ENCODE measurements at regions of chr7 and their contacts with region 1.

Region 1: DNA sequence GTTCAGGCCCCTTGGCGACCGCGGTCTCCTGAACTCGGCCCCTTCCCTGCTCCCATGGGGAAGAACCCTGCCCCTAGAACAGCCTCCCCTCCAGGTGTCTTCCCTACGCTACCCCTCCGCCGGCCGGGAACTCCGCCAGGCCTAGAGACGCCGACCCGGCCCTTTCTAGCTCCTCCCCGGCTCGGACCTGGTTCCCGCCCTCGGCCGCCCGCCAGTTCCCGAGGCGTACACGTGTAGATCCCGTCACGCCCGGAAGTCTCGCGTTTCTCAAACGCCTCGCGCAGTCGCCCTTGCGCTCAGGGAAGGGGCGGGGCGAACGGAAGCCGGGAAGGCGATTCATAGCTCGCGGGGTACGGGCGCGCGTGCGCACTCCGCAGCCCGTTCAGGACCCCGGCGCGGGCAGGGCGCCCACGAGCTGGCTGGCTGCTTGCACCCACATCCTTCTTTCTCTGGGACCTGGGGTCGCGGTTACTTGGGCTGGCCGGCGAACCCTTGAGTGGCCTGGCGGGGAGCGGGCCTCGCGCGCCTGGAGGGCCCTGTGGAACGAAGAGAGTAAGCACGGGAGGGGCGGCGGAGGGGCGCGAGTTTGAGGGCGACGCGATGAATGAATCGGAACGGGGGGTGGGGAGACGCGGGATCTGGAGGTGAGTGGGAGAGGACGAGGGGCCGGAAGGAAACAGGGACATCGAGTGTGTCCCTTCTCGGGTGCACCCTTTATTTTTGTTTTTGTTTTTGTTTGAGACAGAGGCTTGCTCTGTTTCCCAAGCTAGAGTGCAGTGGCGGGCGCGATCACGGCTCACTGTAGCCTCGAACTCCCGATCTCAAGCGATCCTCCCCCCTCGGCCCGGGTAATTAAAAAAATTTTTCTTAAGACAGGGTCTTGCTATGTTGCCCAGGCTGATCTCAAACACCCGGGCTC is at the start of gene POP7:
- DNase-seq: peak; percentile 91 to 99
- H3K4me3 ChIP-seq: peak within 1 kb of the TSS; percentile 86
- H3K27ac ChIP-seq: peak within 1 kb of the TSS; percentile 43
- H3K4me1 ChIP-seq: peaks cover 12% of the 10 kb centered on the region; the same call in 1 of the 2 replicates
- H3K27me3 ChIP-seq: no peaks in the 10 kb centered on the region
- CTCF ChIP-seq: no peak
- total RNA-seq, gene POP7: 59.4 and 62.7 TPM in 2 replicates

Region 2: DNA sequence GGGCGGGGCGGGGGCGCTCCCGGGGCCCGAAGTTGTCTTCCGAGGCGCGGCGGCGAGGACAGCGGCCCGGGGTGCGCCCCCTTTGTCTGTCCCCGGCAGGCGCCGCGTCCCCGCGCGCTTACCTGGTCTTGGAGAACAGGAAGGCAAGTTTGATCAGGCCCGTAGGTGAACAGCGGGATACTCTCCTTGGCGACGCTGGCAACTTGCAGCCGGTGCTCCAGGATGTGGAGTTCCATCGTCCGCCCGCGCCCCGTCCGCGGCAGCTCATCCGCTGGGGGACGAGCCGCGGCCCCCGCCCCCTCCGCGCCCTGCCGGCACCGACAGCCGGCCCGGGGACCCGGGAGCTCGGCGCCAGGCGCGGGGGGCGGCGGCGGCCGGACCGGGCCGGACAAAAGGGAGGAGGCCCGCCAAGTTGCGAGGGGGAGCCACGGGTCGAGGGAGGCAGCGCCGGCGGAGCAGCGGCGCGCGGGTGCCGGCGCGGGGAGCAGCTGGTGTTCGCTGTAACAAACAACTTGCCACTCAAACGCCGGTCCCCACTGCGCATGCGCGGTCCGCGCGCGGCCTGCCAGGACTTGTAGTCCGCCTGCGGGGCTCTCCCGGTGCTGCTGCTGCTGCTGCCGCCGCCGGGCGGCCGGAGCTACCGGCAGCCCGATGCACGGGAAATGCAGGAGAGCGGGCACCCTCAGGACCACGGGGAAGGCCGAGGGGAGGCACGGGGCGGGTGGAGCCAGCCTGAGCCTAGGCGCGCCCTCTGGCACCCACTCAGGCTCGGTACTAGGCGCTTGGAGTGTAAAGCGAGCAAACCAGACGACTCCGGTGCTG is 434.1 kb before region 1 on chr7:
- CTCF ChIA-PET with region 1: no interaction called
- POLR2A ChIA-PET with region 1: interaction called, 17 read pairs
- intact Hi-C with region 1: no loop called
- DNase-seq: peak; percentile 78 to 98
- H3K4me3 ChIP-seq: peak overlapping the region; percentile 60
- H3K27ac ChIP-seq: no peak overlapping the region
- H3K4me1 ChIP-seq: peaks cover 28% of the 10 kb centered on the region
- H3K27me3 ChIP-seq: no peaks in the 10 kb centered on the region
- CTCF ChIP-seq: no peak

Region 3: DNA sequence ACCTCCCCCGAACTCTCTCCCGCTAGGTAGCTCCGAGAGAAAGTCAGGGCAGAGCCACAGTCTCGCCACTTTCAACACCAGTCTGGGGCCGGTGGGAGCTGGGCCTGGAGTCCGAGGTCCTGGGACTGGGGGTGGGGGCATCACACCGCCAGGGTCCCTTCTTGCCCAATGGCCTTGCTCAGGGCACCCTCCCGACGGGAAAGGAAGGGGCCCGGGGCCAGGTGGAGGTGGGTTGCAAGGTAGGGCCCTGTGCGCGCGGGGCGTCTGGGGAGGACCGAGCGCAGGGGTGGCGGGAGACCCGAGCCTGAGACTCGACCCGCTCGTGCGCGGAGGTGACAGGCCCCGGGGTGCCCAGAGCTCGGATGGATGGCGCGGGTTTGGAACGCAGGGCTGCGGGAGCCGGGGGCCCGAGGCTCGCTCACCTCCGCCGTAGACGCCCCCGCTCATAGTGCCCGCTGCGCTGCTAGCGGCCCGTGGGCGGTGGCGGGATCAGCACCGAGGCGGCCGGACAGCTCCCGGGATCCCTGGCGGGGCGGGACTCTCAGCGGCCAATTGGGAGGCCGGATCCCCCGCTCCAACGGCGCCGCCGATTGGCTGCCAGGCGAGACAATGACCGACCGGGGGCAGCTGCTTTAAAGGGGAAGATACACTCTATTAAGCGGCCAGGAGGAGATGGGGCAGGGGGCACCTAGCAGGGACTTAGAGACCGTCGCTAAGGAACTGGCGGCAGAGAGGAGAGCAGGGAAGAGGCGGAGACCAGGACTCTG is 49.9 kb before region 1 on chr7 and contains the start of gene ACTL6B:
- CTCF ChIA-PET with region 1: no interaction called
- POLR2A ChIA-PET with region 1: interaction called, 19 read pairs
- intact Hi-C with region 1: no loop called
- DNase-seq: no peak
- H3K4me3 ChIP-seq: no peak within 1 kb of the TSS
- H3K27ac ChIP-seq: no peak within 1 kb of the TSS
- H3K4me1 ChIP-seq: peaks cover 7% of the 10 kb centered on the region
- H3K27me3 ChIP-seq: no peaks in the 10 kb centered on the region
- CTCF ChIP-seq: no peak
- total RNA-seq, gene ACTL6B: not detected in 2 replicates

Region 4: DNA sequence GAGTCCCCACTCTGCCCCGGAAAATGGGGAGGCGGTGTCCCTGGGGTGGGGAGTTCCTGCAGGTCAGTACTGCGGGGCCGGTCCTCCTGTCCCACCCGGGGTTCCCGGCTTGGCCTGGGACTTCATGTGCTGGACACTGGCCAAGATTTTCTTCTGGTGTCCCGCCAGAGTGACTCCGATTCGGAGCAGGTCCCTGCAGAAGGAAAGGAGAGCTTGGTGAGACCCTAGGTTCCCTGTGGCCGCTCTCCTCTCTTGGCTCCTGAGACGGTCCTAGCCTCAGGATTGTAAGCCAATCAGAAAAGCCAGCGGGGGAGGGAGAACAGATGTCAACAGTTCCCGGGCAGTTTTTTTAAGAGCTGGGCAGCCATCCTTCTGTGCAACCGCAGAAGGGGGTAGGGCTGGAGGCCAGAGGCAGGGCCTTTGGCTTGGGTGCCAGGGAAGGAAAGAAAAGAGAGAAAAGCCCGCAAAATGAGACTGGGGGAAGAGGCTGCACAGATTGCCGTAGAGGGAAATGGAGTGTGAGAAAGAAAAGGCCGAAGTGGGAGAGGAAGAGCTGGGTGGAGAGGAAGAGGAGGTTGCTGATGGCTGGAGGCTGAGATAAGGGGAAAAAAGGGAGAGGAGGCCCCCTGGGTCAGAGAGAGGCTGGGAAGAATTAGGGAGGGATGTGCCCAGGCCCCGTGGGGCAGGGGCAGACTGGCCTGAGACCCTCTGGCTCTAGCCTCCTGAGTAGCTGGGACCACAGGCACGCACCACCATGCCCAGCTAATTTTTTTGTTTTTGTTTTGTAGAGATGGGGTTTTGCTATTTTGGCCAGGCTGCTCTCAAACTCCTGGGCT is 97.6 kb after region 1 on chr7:
- CTCF ChIA-PET with region 1: interaction called, 12 read pairs
- POLR2A ChIA-PET with region 1: interaction called, 5 read pairs
- intact Hi-C with region 1: loop called (anchors 5 kb)
- DNase-seq: peak in 1 of 2 experiments; percentile 76
- H3K4me3 ChIP-seq: no peak overlapping the region
- H3K27ac ChIP-seq: 0 out of 2 replicates have a peak overlapping the region, but pooled peaks have one; percentile 67
- H3K4me1 ChIP-seq: peaks cover 52% of the 10 kb centered on the region
- H3K27me3 ChIP-seq: no peaks in the 10 kb centered on the region
- CTCF ChIP-seq: no peak

Region 5: GRCh38 chr7:100867040-100867775 is 161.2 kb after region 1 on chr7 and contains the start of gene TRIP6:
- CTCF ChIA-PET with region 1: no interaction called
- POLR2A ChIA-PET with region 1: no interaction called
- intact Hi-C with region 1: loop called (anchors 5 kb)
- DNase-seq: peak; percentile 80 to 92
- H3K4me3 ChIP-seq: peak within 1 kb of the TSS; percentile 99
- H3K27ac ChIP-seq: peak within 1 kb of the TSS; percentile 68
- H3K4me1 ChIP-seq: peaks cover 18% of the 10 kb centered on the region
- H3K27me3 ChIP-seq: no peaks in the 10 kb centered on the region
- CTCF ChIP-seq: no peak
- total RNA-seq, gene TRIP6: 89.3 and 91.4 TPM in 2 replicates

Region 6: GRCh38 chr7:101077303-101078089 is 371.5 kb after region 1 on chr7:
- CTCF ChIA-PET with region 1: no interaction called
- POLR2A ChIA-PET with region 1: no interaction called
- intact Hi-C with region 1: loop called (anchors 1 kb)
- DNase-seq: peak; percentile 86 to 96
- H3K4me3 ChIP-seq: no peak overlapping the region
- H3K27ac ChIP-seq: no peak overlapping the region
- H3K4me1 ChIP-seq: peaks cover 25% of the 10 kb centered on the region
- H3K27me3 ChIP-seq: no peaks in the 10 kb centered on the region
- CTCF ChIP-seq: peak; percentile 92

Region 7: DNA sequence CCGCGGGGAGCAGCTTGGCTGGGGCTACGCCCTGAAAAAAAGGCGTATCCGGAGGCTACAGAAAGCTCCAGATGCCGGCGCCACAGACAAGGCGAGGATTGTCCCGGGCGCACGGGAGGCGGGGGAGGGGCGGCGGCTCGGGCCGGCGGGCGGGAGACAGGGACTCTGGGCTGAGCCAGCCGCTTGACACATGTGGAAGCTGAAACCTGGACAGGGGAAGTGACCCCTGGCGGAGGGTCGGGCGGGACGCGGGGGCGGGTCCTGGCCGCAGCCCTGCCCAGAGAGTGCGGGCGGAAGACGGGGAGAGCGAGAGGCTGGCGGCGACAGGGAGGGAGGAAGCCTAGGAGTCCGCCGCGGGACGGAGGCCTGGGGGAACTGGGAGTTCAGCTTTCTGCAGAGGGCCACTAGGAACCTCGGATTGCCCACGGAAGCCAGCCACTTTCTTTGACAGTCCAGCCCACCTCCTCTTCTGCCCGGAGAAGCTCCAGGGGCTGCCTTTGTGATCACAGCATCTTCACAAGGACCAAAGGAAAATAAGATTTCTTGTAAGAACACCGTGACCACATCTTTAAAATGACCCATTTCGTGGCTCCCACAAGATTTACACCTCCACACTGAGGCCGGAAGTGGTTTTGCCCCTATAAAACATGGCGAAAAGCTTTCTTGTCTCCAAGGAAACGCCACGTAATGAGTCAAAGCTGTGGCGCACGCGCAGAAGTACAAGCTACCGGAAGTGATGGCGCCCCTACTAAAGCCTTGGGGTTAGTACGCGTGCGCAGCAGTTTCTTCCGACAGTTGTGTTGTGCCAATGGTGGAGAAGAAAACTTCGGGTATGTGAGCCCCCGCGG is 511.6 kb after region 1 on chr7 and contains the starts of genes PLOD3 and ZNHIT1:
- CTCF ChIA-PET with region 1: no interaction called
- POLR2A ChIA-PET with region 1: no interaction called
- intact Hi-C with region 1: no loop called
- DNase-seq: peak; percentile 92 to 95
- H3K4me3 ChIP-seq: peak within 1 kb of the TSS; percentile 82
- H3K27ac ChIP-seq: peak within 1 kb of the TSS; percentile 80
- H3K4me1 ChIP-seq: 0 out of 2 replicates have a peak, but pooled peaks cover 12% of the 10 kb centered on the region
- H3K27me3 ChIP-seq: no peaks in the 10 kb centered on the region
- CTCF ChIP-seq: no peak
- total RNA-seq, gene PLOD3: 93.2 and 105 TPM in 2 replicates
- total RNA-seq, gene ZNHIT1: 105 and 110 TPM in 2 replicates